A549 (cell line): ENCODE measurements at regions of chr12 and their contacts with region 1.

Region 1: DNA sequence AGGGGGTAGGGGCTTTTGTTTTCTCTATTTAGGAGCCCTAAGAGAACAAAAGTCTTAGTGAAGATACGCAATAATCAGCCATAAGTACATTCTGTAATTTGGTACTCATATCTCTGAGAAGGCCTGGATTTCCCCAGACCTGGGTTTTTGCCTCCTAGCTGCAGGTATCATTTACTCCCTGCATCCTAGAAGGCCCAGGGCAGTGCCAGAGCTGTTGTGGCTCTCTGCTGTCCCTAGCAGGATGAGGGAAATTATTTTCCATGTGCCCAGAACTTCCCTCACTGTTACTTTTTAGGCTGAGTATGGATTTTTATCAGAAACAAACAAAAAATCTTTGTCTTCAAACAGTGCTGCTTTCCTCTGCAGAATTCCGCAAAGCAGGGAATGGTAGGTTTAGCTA is 192.5 kb upstream of the SYT1 start:
- DNase-seq: peak in 1 of 2 experiments; percentile 7
- ATAC-seq: peak in 1 of 2 experiments; percentile 42; a peak in 1 of 6 replicates
- H3K4me3 ChIP-seq: no peak overlapping the region
- H3K27ac ChIP-seq: no peak overlapping the region
- H3K4me1 ChIP-seq: 0 out of 3 replicates have a peak, but pooled peaks cover 3% of the 10 kb centered on the region
- CTCF ChIP-seq: no peak
- EP300 ChIP-seq: no peak
- POLR2A ChIP-seq: no peak
- RAD21 ChIP-seq: no peak

Region 2: GRCh38 chr12:78240684-78241226 is 431.3 kb before region 1 on chr12:
- CTCF ChIA-PET with region 1: no interaction called
- POLR2A ChIA-PET with region 1: interaction called, 12 read pairs
- DNase-seq: no peak
- ATAC-seq: no peak
- H3K4me3 ChIP-seq: no peak overlapping the region
- H3K27ac ChIP-seq: no peak overlapping the region
- H3K4me1 ChIP-seq: no peaks in the 10 kb centered on the region
- CTCF ChIP-seq: no peak
- EP300 ChIP-seq: no peak
- POLR2A ChIP-seq: no peak
- RAD21 ChIP-seq: no peak

Region 3: DNA sequence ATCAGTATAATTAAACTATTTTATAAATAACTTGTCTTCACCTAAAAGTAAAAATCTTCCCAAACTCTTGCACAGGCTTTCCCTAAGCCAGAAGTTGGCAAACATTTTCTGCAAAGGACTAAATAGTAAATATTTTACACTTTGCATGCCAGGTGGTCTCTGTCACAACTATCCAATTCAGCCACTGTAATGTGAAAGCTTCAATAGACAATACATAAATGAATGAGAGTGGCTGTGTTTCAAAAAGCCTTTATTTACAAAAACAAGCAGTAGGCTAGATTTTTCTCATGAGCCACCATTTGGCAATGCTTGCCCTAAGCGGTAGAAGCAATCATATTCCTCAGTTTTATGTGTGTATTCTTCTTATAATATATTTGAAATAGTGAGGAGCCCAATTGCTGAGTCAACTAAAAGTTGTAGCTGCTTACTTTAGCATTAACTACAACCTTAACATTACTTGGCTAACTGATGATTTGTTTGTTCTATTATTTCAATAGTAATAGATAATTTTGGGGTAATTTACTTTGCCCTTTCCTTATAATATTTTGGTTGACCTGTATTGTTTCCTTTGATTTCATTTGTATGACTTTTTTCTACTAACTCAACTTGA is 43.4 kb before region 1 on chr12:
- CTCF ChIA-PET with region 1: no interaction called
- POLR2A ChIA-PET with region 1: no interaction called
- DNase-seq: no peak
- ATAC-seq: no peak
- H3K4me3 ChIP-seq: no peak overlapping the region
- H3K27ac ChIP-seq: no peak overlapping the region
- H3K4me1 ChIP-seq: no peaks in the 10 kb centered on the region
- CTCF ChIP-seq: no peak
- EP300 ChIP-seq: no peak
- POLR2A ChIP-seq: no peak
- RAD21 ChIP-seq: no peak